AG04450 (cell line): ENCODE measurements at regions of chr14 and their contacts with region 1.

Region 1: DNA sequence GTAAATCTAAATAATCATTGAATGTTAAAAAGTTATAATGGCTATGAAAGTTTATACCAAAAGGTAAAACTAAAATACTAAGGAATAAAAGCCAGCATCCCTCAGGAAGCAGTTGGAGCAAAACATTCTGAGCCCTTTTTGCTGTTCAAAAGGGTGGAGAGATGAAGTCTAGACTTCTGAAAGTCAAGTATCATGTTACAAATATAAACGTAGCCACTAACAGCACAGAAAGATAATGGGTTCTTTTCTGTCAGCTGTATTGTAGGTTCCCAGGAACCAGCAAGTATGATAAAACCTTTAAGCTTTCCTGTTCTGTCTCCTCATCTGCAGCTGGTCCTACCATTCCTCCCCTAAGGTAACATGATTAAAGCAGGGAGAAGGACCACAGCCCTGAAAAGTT is 16.4 kb upstream of the PLD4 start:
- DNase-seq: no peak
- H3K4me3 ChIP-seq: no peak overlapping the region
- H3K27ac ChIP-seq: no peak overlapping the region
- H3K27me3 ChIP-seq: peaks cover 29% of the 10 kb centered on the region
- CTCF ChIP-seq: no peak

Region 2: DNA sequence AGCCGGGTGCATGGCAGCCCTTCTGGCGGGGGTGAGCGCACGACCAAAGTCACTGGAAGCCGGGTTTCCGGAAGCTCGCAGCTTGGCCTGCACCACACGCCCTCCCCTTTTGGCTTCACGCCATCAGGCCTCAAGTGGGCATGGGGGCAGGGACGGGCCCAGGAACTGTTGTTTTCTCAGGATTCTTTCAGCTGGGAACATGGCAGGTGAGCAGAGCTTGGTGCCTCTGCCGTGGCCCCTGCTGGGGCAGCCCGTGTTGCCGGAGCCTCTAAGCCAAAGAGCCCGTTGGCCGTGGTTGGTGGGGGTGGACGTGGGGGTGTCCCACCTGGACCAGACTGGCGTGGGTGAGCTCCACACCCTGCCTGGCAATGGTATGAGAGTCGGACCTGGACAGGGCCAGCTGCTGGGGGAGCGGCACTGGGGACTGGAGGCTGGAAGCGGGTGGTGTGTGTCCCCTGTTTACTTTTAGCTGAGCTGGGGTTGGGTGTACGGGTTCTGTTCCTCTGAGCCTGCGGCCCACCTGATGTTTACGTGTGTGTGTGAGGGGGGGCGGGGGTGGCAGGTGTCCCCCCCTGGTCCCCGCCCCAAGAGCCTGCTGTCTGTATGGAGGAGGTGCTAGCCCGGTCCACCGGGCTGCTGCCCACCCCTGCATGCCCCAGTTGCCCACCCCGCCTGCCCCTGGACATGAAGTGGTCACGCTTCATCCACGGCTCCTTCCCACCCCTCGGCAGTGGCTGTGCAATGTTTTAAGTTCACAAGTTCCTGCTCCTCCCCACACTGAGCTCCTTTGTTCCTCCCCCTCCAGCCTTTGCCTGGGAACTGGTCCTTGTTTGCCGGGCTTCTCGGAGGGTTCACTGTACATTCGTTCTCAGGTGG is 12.3 kb before region 1 on chr14:
- CTCF ChIA-PET with region 1: interaction called, 12 read pairs
- POLR2A ChIA-PET with region 1: no interaction called
- DNase-seq: no peak
- H3K4me3 ChIP-seq: no peak overlapping the region
- H3K27ac ChIP-seq: no peak overlapping the region
- H3K27me3 ChIP-seq: peaks cover 3% of the 10 kb centered on the region
- CTCF ChIP-seq: no peak